Activated T-helper 2 cell treated with anti-CD3 and anti-CD28 coated beads, Interferon-gamma antibody, Interleukin-2, Interleukin-4, amounts not matched to agents 10 μg/mL and 5 μg/mL and 100 μg/mL, durations not matched to agents 14 hours and 24 hours and 36 hours (primary cell): ENCODE measurements at regions of chr19 and their contacts with region 1.

Region 1: DNA sequence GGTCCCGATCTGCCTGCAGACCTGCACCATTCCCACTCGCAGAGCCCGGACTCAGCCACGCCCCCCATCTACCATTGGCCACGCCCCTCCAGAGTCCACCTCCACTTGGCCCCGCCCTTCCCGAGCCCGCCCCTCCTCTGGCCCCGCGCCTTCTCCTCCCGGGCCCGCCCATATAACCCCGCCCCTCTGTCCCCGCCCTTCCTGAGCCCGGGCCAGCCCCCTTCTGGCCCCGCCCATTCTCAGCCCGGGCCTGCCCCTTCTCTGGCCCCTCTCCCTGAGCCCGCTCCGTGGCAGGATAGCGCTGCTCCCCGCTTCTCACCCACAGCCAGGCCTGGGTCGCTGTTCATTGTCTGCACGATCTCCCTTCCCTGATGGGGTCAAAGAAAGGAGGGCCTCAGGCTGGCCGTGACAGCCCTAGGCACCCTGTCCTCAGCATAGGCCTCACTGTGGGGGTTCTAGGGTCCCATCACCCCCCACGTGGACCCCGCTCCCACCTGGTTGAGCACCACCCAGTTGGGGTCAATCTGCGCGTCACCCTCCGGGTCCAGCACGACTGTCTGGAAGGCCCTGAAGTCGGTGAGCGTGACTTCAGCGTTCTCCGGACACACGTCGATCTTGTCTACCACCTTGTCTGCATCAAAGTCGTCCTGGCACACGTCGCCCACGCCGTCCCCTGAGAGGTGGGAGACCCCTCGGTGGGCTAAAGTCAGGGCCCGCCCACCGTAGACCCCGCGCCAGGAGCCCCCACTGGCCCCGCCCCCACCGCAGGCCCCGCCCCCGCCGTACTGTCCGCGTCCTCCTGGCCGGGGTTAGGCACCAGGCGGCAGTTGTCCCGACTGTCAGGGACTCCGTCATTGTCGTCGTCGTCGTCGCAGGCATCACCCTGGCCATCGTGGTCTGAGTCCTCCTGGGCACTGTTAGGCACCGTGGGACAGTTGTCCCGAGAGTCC is 5.7 kb downstream of the COMP start:
- DNase-seq: peak; percentile 49
- H3K4me3 Mint-ChIP-seq: no peak overlapping the region
- H3K27ac Mint-ChIP-seq: no peak overlapping the region
- H3K4me1 Mint-ChIP-seq: peaks cover 17% of the 10 kb centered on the region
- H3K27me3 Mint-ChIP-seq: peaks cover 44% of the 10 kb centered on the region

Region 2: DNA sequence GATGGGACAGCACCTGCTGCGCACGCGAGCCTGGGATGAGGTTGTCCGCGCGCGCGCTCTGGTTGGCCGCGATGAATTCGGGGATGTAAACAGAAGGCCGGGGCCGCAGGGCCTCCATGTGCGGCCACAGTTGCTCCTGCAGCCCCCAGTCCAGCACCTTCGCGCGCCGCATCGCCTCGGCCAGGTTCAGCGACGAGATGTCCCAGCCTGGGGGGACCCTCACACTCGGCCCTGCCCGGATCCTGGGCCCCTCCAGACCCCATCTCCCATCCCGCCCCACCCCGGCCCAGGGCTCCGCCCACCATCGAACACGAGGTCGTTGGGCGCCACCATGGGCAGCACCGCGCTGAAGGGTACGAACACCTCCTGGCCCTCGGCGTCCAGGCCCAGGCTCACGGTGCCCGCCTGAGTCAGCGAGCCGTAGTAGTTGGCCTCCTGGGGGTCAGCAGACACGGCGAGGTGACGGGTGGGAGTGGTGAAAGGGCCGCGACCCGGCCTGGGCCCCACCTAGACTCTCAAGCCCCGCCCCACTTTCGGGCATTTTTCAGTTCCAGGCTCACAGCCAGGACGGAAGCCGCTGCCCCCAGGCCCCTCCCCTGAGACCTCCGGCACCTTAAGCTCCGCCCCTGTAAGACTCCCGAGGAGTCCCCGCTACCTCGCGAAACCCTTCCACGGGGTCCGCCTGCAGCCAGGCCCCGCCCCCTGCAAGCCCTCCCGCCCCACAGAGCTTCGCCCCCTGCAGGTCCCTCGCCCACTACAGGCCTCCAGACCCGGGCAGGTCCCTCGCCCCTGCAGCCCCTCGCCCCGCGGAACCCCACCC is 348.6 kb before region 1 on chr19:
- intact Hi-C with region 1: loop called (anchors 5 kb)
- DNase-seq: peak; percentile 65
- H3K4me3 Mint-ChIP-seq: peak overlapping the region; percentile 64
- H3K27ac Mint-ChIP-seq: no peak overlapping the region
- H3K4me1 Mint-ChIP-seq: peaks cover 11% of the 10 kb centered on the region
- H3K27me3 Mint-ChIP-seq: no peaks in the 10 kb centered on the region

Region 3: GRCh38 chr19:18610556-18611326 is 174.7 kb before region 1 on chr19:
- intact Hi-C with region 1: loop called (anchors 1 kb)
- DNase-seq: no peak
- H3K4me3 Mint-ChIP-seq: no peak overlapping the region
- H3K27ac Mint-ChIP-seq: no peak overlapping the region
- H3K4me1 Mint-ChIP-seq: peaks cover 5% of the 10 kb centered on the region
- H3K27me3 Mint-ChIP-seq: peaks cover 70% of the 10 kb centered on the region

Region 4: DNA sequence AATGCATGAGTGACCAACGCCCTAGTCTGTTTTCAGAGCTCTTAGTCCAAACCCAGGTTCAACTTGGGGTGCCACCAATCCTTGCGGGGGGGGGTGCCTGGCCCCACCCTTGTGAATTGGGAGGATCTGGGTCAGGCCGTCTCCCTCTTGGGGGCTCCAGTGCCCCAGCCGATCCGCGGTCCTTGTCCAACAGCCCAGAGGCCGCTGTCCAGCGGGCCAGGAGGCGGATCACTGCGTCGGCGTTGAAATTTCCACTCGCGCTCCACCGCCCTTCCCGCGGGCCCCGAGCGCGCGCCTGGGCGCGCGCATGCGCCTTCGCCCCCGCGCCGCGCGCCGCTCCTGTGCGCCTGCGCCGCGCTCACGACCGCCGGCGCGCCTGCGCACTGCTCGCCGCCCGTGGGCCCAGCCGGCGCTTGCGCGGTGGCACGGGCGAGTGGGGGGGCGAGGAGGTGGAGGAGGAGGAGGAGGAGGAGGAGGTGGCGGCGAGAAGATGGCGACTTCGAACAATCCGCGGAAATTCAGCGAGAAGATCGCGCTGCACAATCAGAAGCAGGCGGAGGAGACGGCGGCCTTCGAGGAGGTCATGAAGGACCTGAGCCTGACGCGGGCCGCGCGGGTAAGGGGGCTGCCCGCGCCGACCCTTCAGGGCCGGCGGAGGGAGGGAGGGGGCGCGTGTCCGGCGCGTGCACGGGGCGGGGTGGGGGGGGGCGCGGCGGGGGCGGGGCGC is 102.1 kb before region 1 on chr19 and contains the start of gene CRTC1:
- intact Hi-C with region 1: no loop called
- DNase-seq: peak; percentile 89
- H3K4me3 Mint-ChIP-seq: peak within 1 kb of the TSS; percentile 84
- H3K27ac Mint-ChIP-seq: peak within 1 kb of the TSS; percentile 83
- H3K4me1 Mint-ChIP-seq: peaks cover 5% of the 10 kb centered on the region
- H3K27me3 Mint-ChIP-seq: peaks cover 2% of the 10 kb centered on the region
- total RNA-seq, gene CRTC1: 6.4 and 7.0 TPM in 2 replicates